T-cell (primary cell): ENCODE measurements at regions of chr2 and their contacts with region 1.

Region 1: DNA sequence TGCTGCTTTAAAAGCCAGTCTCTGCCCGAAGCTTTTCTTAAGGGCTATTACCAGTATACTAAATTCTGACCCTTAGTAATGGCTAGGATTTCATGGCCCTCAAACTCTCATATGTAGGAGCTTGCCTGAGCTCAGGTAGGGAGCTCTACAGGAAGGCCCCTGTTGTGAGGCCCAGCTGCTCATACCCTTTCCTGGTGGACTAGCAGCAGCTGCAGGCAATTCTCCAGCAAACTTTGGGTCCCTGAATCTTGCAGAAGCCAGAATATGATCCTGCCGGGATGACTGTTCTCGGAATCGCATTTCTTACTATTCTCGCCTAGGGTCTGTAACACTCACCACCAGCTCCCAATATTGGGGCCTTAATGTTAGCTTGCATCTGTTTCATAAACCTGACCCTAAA is 106.4 kb upstream of the SERTAD2 start:
- DNase-seq: no peak
- ATAC-seq: no peak
- H3K4me3 ChIP-seq: no peak overlapping the region
- H3K4me3 Mint-ChIP-seq: no peak overlapping the region
- H3K27ac ChIP-seq: no peak overlapping the region
- H3K27ac Mint-ChIP-seq: no peak overlapping the region
- H3K4me1 ChIP-seq: no peaks in the 10 kb centered on the region
- H3K4me1 Mint-ChIP-seq: no peaks in the 10 kb centered on the region
- H3K27me3 ChIP-seq: no peaks in the 10 kb centered on the region
- H3K27me3 Mint-ChIP-seq: no peaks in the 10 kb centered on the region

Region 2: DNA sequence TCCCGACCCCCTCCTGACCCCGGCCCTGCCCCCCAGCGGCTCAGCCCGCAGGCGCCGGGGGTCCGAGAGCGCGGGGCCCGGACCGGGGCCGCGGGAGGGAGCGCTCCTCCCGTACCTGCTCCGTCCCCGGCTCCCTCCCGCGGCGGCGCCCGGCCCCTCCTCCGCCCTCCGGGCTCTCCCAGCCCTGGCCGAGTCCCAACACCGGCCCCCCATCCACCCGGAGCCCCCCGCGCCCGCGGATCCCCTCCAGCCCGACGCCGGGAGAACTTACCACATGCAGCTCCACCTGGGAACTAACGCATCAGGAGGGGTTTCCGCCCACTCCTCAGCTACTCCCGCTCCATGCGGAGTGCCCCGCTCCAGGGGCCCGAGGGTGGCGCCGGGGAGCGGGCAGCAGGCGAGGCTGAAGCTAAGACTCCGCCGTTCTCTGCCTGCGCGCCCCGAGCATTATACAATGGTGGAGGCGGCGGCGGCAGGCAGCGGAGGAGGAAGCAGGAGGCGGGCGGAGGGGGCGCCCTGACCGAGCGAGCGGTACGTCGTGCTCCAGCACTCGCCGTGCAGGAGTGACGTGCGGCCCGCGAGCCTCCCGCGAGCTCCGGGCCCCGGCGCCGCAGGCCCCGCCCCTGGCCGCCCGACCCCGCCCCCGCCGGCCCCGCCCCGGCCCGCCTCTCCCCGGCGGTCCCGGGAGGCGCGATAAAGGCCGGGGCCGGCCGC is 106.6 kb before region 1 on chr2 and contains the start of gene SERTAD2:
- CTCF ChIA-PET with region 1: interaction called in 1 of 2 experiments, 5 read pairs
- POLR2A ChIA-PET with region 1: interaction called in 1 of 2 experiments, 11 read pairs
- DNase-seq: peak; percentile 71 to 93 (median 85)
- ATAC-seq: peak; percentile 89 to 91 (median 90)
- H3K4me3 ChIP-seq: peak within 1 kb of the TSS; percentile 94 to 96
- H3K4me3 Mint-ChIP-seq: peak within 1 kb of the TSS; percentile 88 to 91 (median 89)
- H3K27ac ChIP-seq: peak within 1 kb of the TSS; percentile 86
- H3K27ac Mint-ChIP-seq: peak within 1 kb of the TSS; percentile 91 to 92
- H3K4me1 ChIP-seq: peaks cover 25 to 56% of the 10 kb centered on the region in 2 experiments
- H3K4me1 Mint-ChIP-seq: peaks cover 75 to 81% (median 76%) of the 10 kb centered on the region in 3 donors
- H3K27me3 ChIP-seq: no peaks in the 10 kb centered on the region
- H3K27me3 Mint-ChIP-seq: no peaks in the 10 kb centered on the region
- total RNA-seq, gene SERTAD2: 22.8 to 39.7 (median 27.4) TPM